ENCODE measurements at regions of chr2 and their contacts with region 1.

Region 1: DNA sequence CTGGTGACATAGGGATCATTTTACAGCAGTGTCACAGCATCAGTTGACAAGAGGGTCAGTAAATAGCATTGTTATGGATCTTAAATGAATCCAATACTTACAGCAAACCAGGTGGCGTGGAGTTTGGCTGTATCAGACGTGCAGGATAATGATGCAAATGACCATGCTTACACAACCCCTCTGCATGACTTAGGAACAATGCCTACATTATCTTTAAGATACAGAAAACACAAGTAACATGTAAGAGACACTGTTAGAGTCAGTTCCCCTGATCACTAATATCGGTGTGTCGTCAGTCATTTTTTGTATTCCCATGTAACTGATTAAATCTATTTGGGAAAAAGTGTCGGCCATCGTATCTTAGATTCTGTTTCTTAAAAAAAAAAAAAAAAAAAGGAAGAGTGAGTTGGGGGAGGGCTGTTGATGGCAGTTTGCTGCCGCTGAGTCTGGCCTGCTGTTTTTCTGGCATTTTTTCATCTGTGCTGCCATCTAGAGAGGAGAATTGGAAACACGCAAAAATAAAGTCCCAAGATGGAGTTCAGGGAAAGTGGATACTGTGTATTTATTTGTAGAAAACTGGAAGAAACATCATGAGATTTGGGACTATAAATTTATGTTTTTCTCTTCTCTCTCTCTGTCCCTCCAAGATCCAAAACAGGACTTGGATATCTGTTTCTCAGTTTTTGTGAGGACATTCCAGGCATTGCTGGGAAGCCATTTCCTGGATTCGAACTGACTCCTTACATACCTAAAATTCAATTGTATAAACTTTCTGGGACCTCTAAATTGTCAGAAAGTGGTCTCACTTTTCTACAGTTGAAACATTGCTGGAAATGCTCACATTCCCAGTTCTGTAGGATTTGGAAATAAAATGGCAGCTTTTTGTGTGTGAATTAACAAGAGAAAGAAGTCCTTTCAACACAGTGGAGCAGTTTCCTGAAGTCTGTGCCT is 60.3 kb upstream of the AGPS start:
- DNase-seq: no peak
- H3K4me3 ChIP-seq: no peak overlapping the region
- CTCF ChIP-seq: peak; percentile 50

Region 2: DNA sequence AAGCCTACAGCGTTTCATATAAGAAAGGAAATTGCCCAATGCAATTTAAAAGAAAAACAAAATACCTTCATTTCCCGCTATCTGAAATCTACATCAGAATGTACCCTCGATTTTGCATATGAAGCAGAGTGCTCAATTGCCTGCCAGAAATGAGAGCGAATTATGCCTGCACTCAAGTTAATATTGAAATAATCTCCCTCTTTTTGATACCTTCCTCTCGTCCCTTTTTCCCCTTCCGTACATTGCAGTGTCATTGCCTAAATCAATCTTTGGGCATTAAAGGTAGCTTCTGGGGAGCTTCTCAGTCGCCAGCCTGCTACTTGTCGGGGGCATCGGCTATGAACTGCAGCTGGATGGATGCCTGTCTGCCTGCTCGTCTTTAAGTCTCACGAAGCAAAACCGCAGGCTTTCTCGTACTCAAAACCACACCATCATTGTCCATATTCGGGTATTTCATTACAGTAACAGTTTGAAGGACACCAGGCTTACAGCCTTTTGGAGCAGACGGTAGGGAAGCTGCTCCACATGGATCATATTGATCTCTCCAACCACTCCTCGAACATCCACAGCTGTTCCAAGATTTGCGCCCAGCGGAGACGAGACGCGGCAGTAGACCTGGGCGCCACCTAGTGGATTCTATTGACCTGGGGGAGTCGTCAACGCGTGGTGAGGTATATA is 183.7 kb before region 1 on chr2:
- CTCF ChIA-PET with region 1: interaction called, 12 read pairs
- POLR2A ChIA-PET with region 1: no interaction called
- DNase-seq: no peak
- H3K4me3 ChIP-seq: peak overlapping the region; percentile 54
- CTCF ChIP-seq: peak; percentile 91

Region 3: GRCh38 chr2:177344316-177344715 is 12.0 kb after region 1 on chr2:
- CTCF ChIA-PET with region 1: interaction called, 22 read pairs
- POLR2A ChIA-PET with region 1: no interaction called
- DNase-seq: no peak
- H3K4me3 ChIP-seq: no peak overlapping the region
- CTCF ChIP-seq: no peak

Region 4: GRCh38 chr2:177392373-177393202 is 60.3 kb after region 1 on chr2 and contains the start of gene AGPS:
- CTCF ChIA-PET with region 1: interaction called, 46 read pairs
- POLR2A ChIA-PET with region 1: no interaction called
- DNase-seq: no peak
- H3K4me3 ChIP-seq: peak within 1 kb of the TSS; percentile 78
- CTCF ChIP-seq: peak; percentile 22

Region 5: GRCh38 chr2:177419274-177419673 is 87.0 kb after region 1 on chr2:
- CTCF ChIA-PET with region 1: interaction called, 224 read pairs
- POLR2A ChIA-PET with region 1: no interaction called
- DNase-seq: peak; percentile 19
- H3K4me3 ChIP-seq: no peak overlapping the region
- CTCF ChIP-seq: no peak

Region 6: DNA sequence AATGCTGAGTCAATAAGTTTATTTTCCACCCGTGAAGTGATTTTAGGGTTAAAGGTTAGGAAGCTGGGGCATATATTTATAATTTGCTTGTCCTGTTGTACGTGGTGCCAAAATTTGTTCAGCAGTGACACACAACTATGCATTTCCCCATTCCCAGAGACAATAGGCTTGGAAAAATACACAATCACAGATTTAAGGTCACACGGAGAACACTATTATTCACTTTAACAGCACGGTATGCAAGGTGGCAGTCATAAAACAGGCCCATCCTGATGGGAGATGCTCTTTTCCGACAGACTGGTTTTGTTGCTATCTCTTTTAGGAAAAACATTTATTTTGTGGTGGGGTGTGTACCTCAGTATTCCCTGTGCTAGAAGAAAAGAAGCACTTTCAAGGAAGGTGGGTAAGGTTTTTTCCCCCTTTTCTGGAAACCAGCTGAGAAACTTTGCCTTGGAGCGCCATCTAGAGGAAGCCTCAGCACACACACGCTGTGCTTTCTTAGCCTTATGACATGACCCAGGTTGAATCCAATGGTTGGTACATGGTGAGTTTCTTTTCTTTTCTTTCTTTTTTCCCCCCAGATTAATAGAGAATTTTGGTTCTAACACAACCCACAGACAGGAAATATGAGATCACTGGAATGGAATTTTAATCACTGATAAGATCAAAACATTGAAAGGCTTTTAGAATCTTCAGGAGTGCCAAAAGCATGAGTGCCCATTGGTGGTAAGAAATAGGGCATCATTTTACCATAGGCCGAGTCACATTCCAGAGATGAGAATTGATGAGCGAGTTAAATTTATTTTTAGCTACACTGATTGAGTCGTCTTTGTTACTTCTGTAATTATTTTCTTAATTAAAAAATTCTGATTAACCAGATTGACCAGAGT is 392.3 kb after region 1 on chr2:
- CTCF ChIA-PET with region 1: interaction called, 36 read pairs
- POLR2A ChIA-PET with region 1: no interaction called
- DNase-seq: no peak
- H3K4me3 ChIP-seq: no peak overlapping the region
- CTCF ChIP-seq: peak; percentile 81

Measured in AG04449 (cell line).